ENCODE measurements at regions of chr14 and their contacts with region 1.

Region 1: DNA sequence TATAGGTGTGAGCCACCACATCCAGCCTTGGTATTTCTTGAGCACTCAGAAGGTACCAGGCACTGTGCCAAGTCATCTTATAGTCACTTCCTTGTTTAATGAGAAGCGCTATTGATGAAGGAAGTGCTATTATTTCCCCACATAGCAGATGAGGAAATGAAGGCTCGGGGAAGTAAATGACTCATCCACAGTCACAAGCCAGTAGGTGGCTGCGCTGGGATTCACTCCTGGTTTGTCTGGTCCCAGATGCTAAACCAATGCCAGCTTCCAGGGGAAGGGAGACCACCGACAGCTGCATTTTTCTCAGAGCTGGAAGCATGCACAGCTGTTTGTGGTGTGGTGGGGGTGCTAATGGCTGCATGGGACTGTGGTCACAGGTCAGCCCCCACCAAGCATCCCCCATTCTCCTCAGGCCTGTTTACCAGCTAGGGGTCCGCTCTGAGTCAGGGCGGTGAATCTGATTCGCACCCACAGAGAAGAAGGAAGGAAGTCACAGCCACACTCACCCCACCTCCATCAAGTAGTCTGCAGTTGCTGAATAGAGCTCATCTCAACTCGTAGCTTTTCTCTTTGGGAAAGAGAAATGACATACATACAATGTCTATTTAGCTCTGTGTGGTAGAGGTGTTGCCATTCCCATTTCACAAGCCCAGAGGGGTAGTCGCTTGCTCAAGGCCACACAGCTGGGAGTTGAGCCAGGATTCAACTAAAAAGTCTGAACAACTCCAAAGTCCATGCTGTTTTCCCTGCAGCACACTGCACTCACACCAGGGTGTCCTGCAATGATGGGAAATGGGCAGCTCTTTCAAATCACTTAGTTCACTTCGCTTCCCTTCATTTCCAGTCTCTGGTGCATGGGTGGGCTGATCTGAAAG is 6.3 kb upstream of the LTBP2 start:
- DNase-seq: peak; percentile 57
- H3K4me3 Mint-ChIP-seq: peak overlapping the region; percentile 43
- H3K27ac Mint-ChIP-seq: peak overlapping the region; percentile 67
- H3K4me1 Mint-ChIP-seq: peaks cover 75% of the 10 kb centered on the region
- H3K27me3 Mint-ChIP-seq: peaks cover 30% of the 10 kb centered on the region

Region 2: GRCh38 chr14:74571901-74572725 is 46.2 kb before region 1 on chr14:
- intact Hi-C with region 1: loop called (anchors 2 kb)
- DNase-seq: no peak
- H3K4me3 Mint-ChIP-seq: peak overlapping the region; percentile 24
- H3K27ac Mint-ChIP-seq: peak overlapping the region; percentile 46
- H3K4me1 Mint-ChIP-seq: peaks cover 39% of the 10 kb centered on the region
- H3K27me3 Mint-ChIP-seq: peaks cover 4% of the 10 kb centered on the region

Region 3: GRCh38 chr14:74579447-74580274 is 38.7 kb before region 1 on chr14:
- intact Hi-C with region 1: loop called (anchors 2 kb)
- DNase-seq: peak; percentile 19
- H3K4me3 Mint-ChIP-seq: no peak overlapping the region
- H3K27ac Mint-ChIP-seq: peak overlapping the region; percentile 89
- H3K4me1 Mint-ChIP-seq: peaks cover 53% of the 10 kb centered on the region
- H3K27me3 Mint-ChIP-seq: no peaks in the 10 kb centered on the region

Region 4: DNA sequence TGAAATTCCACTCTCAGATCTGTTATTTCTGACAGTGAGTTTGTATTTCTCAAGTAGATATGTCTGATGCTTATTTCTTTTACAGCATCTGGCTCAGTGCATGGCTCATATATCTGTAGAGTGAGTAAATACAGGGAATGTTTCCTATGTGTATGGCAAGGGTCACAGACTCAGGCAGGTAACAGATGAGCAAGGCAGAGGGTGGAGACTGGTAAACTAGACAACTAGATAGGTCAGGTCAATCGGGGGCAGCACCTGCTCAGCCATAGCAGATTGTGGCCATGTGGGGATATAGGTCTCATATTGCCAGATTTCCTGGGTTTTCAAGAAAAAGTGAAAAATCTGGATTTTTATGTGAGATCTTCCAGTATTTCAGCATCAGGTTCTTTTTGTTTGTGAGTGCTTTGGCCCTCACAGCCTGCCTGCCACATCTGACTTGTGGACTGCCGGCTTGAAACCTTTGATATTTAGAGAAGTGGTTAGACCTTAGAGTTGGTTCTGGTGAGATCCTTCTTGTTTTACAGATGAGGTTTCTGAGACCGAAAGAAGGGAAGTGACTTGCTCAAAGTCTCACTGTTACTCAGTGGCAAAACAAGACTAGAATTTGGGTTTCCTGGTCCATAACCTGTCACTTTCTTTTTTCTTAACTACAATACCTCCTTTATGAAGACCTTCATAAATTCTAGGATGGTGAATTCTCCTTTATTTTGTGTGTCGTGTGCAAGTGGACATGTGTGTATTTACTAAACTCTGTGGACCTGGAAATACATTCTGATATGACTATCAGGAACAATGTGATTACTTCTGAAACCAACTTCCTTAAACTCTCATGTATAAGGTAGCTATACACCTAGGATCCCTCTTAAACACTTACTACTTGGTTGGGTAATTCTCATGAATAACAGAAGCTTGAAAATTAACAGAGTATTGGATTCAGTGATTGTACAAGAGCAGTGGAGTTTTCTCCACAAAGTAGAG is 223.2 kb after region 1 on chr14:
- intact Hi-C with region 1: loop called (anchors 2 kb)
- DNase-seq: peak; percentile 30
- H3K4me3 Mint-ChIP-seq: peak overlapping the region; percentile 72
- H3K27ac Mint-ChIP-seq: peak overlapping the region; percentile 92
- H3K4me1 Mint-ChIP-seq: peaks cover 60% of the 10 kb centered on the region
- H3K27me3 Mint-ChIP-seq: no peaks in the 10 kb centered on the region